Heart right ventricle (tissue), 16 donors: ENCODE measurements at regions of chr7 and their contacts with region 1.

Region 1: DNA sequence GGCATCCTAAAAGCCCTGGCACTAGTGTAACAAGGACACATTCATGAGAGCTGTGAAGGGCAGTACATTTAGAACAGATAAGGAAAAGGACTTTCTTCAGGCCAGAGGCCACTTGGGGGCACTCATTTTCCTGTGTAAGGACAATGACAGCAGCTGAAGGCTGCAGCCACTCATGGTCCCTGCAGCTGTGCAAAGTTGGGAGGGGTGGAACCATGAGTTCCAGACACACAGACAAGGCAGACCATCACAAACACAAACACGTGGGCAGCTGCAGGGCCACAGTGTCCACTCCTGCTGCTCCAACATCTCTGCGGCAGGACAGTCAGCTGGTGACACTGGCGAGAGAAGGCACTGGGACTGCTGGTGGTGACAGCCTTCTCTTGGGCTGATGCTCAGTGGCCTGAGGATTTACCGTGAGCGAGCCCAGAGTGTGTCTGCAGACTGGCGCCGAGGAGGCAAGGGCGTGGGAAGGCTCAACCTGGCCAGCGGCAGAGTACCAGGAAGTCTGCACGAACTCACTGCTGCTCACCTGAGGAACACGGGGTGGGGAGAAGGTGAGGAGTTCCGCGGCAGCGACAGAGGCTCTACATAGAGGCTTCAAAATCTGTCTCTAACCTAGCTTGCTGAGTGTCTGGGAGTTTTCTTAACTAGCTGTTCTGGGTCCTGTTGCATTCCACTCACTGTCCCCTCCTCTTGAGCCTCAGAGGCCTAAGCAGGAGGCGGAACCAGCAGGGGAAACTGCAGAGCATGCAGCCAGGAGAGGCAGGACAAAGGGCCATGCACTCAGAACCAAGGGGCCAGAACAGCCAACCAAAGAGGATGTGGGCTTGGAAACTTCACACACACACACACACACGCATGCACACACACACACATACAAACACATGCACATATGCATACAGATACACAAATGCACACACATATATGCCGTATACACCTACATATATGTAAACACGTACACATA is 76.5 kb upstream of the DDC start:
- DNase-seq: peak in 1 of 2 donors; percentile 53
- ATAC-seq: peak; percentile 77 to 95 (median 90)
- H3K4me3 ChIP-seq: no peak overlapping the region
- H3K27ac ChIP-seq: peak overlapping the region in 8 of 10 donors; percentile 7 to 79 (median 50)
- H3K4me1 ChIP-seq: peaks cover 4 to 33% (median 17%) of the 10 kb centered on the region in 9 donors
- H3K27me3 ChIP-seq: no peaks in the 10 kb centered on the region
- CTCF ChIP-seq: peak in 8 of 9 donors; percentile 12 to 55 (median 34)

Region 2: GRCh38 chr7:50687575-50688225 is 46.0 kb after region 1 on chr7:
- intact Hi-C with region 1: loop called in 2 of 10 experiments (anchors 5 kb)
- DNase-seq: no peak
- ATAC-seq: peak in 5 of 8 donors; percentile 21 to 70 (median 61)
- H3K4me3 ChIP-seq: no peak overlapping the region
- H3K27ac ChIP-seq: peak overlapping the region in 3 of 10 donors; percentile 13 to 38 (median 19)
- H3K4me1 ChIP-seq: peaks cover 7 to 64% (median 40%) of the 10 kb centered on the region in 9 donors
- H3K27me3 ChIP-seq: no peaks in the 10 kb centered on the region
- CTCF ChIP-seq: no peak